GM10248 (cell line): ENCODE measurements at regions of chr2 and their contacts with region 1.

Region 1: GRCh38 chr2:110095994-110096633 is 19.5 kb downstream of the MALL start:
- DNase-seq: no peak
- CTCF ChIP-seq: no peak

Region 2: DNA sequence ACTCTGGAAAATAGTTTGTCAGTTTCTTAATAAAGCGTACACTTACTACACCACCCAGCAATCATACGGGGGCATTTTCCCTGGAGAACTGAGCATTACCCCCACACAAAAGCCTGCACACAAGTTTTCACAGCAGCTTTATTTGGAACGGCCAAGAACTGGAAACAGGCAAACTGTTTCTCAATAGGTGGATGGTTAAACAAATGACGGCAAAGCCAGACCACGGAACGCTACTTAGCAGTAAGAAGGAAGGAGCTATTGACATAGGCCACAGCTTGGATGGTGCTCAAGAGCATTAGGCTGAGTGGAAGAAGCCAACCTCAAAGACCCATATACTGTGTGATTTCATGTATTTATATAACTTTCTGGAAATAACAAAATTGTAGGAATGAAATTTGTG is 10.5 kb after region 1 on chr2:
- CTCF ChIA-PET with region 1: no interaction called
- POLR2A ChIA-PET with region 1: no interaction called
- DNase-seq: no peak
- CTCF ChIP-seq: no peak

Region 3: GRCh38 chr2:110120171-110121051 is 24.3 kb after region 1 on chr2:
- CTCF ChIA-PET with region 1: no interaction called
- POLR2A ChIA-PET with region 1: no interaction called
- DNase-seq: no peak
- CTCF ChIP-seq: no peak

Region 4: GRCh38 chr2:111091811-111092211 is 995.7 kb after region 1 on chr2:
- CTCF ChIA-PET with region 1: no interaction called
- POLR2A ChIA-PET with region 1: interaction called, 11 read pairs
- DNase-seq: no peak
- CTCF ChIP-seq: no peak